ENCODE measurements at regions of chr3 and their contacts with region 1.

Region 1: GRCh38 chr3:114319453-114319852 is 25.6 kb downstream of the TIGIT start:
- DNase-seq: no peak
- H3K4me3 Mint-ChIP-seq: no peak overlapping the region
- H3K27ac Mint-ChIP-seq: peak overlapping the region; percentile 1
- H3K4me1 Mint-ChIP-seq: peaks cover 60% of the 10 kb centered on the region
- H3K27me3 Mint-ChIP-seq: no peaks in the 10 kb centered on the region

Region 2: DNA sequence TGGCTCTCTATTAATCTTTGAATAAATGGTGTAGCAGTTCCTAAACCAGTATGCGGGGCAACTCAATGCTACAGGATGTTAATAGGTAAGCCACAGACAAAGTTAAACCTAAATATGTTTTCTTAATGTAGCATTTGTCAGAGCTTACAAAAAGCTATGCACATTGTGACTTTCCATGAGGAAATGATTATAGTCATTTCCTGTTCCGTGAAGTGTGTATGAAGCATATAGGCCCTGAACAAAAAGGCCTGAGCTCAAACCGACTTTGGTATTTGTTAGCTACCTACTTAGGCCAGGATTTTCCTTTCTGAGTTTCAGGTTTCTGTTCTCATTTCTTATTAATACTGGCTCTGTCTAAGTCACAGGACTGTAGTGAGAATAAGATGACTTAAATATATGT is 96.3 kb before region 1 on chr3:
- intact Hi-C with region 1: loop called (anchors 1 kb)
- DNase-seq: no peak
- H3K4me3 Mint-ChIP-seq: peak overlapping the region; percentile 37
- H3K27ac Mint-ChIP-seq: peak overlapping the region; percentile 91
- H3K4me1 Mint-ChIP-seq: peaks cover 79% of the 10 kb centered on the region
- H3K27me3 Mint-ChIP-seq: no peaks in the 10 kb centered on the region

Region 3: GRCh38 chr3:114480442-114480841 is 161.0 kb after region 1 on chr3:
- intact Hi-C with region 1: no loop called
- DNase-seq: no peak
- H3K4me3 Mint-ChIP-seq: no peak overlapping the region
- H3K27ac Mint-ChIP-seq: no peak overlapping the region
- H3K4me1 Mint-ChIP-seq: peaks cover 10% of the 10 kb centered on the region
- H3K27me3 Mint-ChIP-seq: peaks cover 1% of the 10 kb centered on the region